GM12878 (cell line): ENCODE measurements at regions of chr3 and their contacts with region 1.

Region 1: GRCh38 chr3:123559040-123559861 is 25.6 kb downstream of the HACD2 start:
- DNase-seq: no peak
- ATAC-seq: peak; percentile 60
- H3K4me3 ChIP-seq: no peak overlapping the region
- H3K27ac ChIP-seq: no peak overlapping the region
- H3K4me1 ChIP-seq: no peaks in the 10 kb centered on the region
- H3K27me3 ChIP-seq: no peaks in the 10 kb centered on the region
- CTCF ChIP-seq: peak; percentile 63 to 78 (median 70); a peak in 5 of 6 replicates
- EP300 ChIP-seq: no peak
- POLR2A ChIP-seq: no peak
- RAD21 ChIP-seq: peak; percentile 83

Region 2: GRCh38 chr3:123328851-123329635 is 230.2 kb before region 1 on chr3:
- CTCF ChIA-PET with region 1: interaction called, 93 read pairs
- POLR2A ChIA-PET with region 1: no interaction called
- RAD21 ChIA-PET with region 1: interaction called, 7 read pairs
- SMC1A ChIA-PET with region 1: interaction called, 15 read pairs
- in situ Hi-C with region 1: loop called (anchors 5 kb)
- intact Hi-C with region 1: loop called (anchors 1 kb)
- DNase-seq: no peak
- ATAC-seq: peak; percentile 98
- H3K4me3 ChIP-seq: no peak overlapping the region
- H3K27ac ChIP-seq: no peak overlapping the region
- H3K4me1 ChIP-seq: no peaks in the 10 kb centered on the region
- H3K27me3 ChIP-seq: no peaks in the 10 kb centered on the region; a peak in 2 of 4 replicates
- CTCF ChIP-seq: peak; percentile 87 to 90 (median 89)
- EP300 ChIP-seq: no peak
- POLR2A ChIP-seq: no peak
- RAD21 ChIP-seq: peak; percentile 63

Region 3: DNA sequence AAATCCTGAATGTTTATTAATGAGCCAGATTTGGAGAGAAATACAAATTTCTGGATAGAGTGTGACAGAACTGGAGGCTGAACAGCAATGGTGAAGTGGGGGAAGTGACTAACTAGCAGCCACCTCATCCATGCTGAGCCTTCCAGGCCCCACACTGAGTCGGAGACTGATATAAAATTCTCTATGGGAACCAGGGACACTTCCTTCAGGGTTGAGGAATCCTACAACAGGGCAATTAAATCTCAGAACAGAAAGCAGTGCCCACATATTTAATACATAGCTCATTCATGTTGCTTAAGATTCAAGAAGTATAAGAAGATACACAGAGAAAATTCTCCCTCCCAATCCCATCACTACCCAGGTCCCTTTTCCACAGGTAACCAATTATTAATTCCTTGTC is 23.7 kb before region 1 on chr3:
- CTCF ChIA-PET with region 1: interaction called, 10 read pairs
- POLR2A ChIA-PET with region 1: no interaction called
- RAD21 ChIA-PET with region 1: interaction called, 3 read pairs
- SMC1A ChIA-PET with region 1: interaction called, 7 read pairs
- in situ Hi-C with region 1: no loop called
- intact Hi-C with region 1: no loop called
- DNase-seq: no peak
- ATAC-seq: no peak
- H3K4me3 ChIP-seq: no peak overlapping the region
- H3K27ac ChIP-seq: no peak overlapping the region
- H3K4me1 ChIP-seq: peaks cover 11% of the 10 kb centered on the region
- H3K27me3 ChIP-seq: no peaks in the 10 kb centered on the region
- CTCF ChIP-seq: no peak
- EP300 ChIP-seq: no peak
- POLR2A ChIP-seq: no peak
- RAD21 ChIP-seq: no peak

Region 4: DNA sequence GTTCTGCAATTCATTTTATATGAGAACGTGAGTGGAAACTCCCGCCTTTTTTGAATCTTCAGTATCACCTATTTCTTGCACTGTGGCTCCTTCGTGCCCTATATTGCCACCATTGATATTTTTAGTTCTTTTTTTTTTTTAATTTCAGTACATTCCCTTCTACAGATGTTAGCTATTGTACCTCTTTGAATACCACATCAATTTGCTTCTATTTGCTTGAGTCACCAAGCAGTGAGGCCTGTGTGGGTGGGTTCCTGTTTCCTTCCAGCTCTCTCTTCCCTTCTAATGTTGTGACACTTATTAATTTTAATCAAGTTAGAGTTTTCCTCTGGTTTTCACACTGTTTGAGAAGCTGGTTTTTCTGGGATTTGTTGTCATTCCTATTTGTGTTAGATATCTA is 16.9 kb after region 1 on chr3:
- CTCF ChIA-PET with region 1: interaction called, 61 read pairs
- POLR2A ChIA-PET with region 1: interaction called, 3 read pairs
- RAD21 ChIA-PET with region 1: interaction called, 7 read pairs
- SMC1A ChIA-PET with region 1: interaction called, 56 read pairs
- in situ Hi-C with region 1: no loop called
- intact Hi-C with region 1: no loop called
- DNase-seq: no peak
- ATAC-seq: peak; percentile 85
- H3K4me3 ChIP-seq: no peak overlapping the region
- H3K27ac ChIP-seq: peak overlapping the region; percentile 25
- H3K4me1 ChIP-seq: peaks cover 13% of the 10 kb centered on the region; the same call in 1 of the 2 replicates
- H3K27me3 ChIP-seq: no peaks in the 10 kb centered on the region
- CTCF ChIP-seq: no peak
- EP300 ChIP-seq: no peak
- POLR2A ChIP-seq: no peak
- RAD21 ChIP-seq: no peak

Region 5: DNA sequence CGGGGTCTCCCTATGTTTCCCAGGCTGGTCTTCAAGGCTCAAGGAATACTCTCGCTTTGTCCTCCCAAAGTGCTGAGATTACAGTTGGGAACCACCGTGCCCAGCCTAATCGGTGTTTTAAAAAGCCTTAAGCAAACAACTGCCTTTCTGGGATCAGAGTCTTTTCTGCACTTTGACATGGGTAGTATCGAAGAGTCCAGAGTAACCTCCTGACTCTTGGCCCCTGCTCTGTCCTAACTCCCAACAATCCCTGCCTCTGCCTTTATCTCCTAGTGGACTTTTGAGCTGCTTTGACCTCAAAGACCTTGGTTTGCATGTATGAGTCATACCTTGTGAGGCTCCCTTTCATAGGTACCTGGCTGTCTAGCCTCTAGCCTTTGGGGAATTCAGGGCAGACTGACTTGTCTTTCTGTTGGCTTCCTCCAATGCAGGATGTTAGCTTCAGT is 46.6 kb after region 1 on chr3:
- CTCF ChIA-PET with region 1: interaction called, 19 read pairs
- POLR2A ChIA-PET with region 1: no interaction called
- RAD21 ChIA-PET with region 1: no interaction called
- SMC1A ChIA-PET with region 1: interaction called, 3 read pairs
- in situ Hi-C with region 1: no loop called
- intact Hi-C with region 1: no loop called
- DNase-seq: peak; percentile 55
- ATAC-seq: peak; percentile 88
- H3K4me3 ChIP-seq: no peak overlapping the region
- H3K27ac ChIP-seq: peak overlapping the region; percentile 22; the same call in 1 of the 2 replicates
- H3K4me1 ChIP-seq: peaks cover 23% of the 10 kb centered on the region
- H3K27me3 ChIP-seq: no peaks in the 10 kb centered on the region
- CTCF ChIP-seq: no peak
- EP300 ChIP-seq: no peak
- POLR2A ChIP-seq: no peak
- RAD21 ChIP-seq: no peak